Sigmoid colon (tissue), 7 donors: ENCODE measurements at regions of chr14 and their contacts with region 1.

Region 1: GRCh38 chr14:99192028-99192621 is 79.9 kb downstream of the BCL11B start:
- DNase-seq: peak; percentile 78
- H3K4me3 ChIP-seq: peak overlapping the region; percentile 24 to 50 (median 42)
- H3K27ac ChIP-seq: peak overlapping the region; percentile 22 to 60 (median 45)
- H3K4me1 ChIP-seq: peaks cover 0 to 18% (median 14%) of the 10 kb centered on the region in 4 donors
- H3K27me3 ChIP-seq: no peaks in the 10 kb centered on the region
- CTCF ChIP-seq: no peak
- EP300 ChIP-seq: no peak
- POLR2A ChIP-seq: no peak

Region 2: DNA sequence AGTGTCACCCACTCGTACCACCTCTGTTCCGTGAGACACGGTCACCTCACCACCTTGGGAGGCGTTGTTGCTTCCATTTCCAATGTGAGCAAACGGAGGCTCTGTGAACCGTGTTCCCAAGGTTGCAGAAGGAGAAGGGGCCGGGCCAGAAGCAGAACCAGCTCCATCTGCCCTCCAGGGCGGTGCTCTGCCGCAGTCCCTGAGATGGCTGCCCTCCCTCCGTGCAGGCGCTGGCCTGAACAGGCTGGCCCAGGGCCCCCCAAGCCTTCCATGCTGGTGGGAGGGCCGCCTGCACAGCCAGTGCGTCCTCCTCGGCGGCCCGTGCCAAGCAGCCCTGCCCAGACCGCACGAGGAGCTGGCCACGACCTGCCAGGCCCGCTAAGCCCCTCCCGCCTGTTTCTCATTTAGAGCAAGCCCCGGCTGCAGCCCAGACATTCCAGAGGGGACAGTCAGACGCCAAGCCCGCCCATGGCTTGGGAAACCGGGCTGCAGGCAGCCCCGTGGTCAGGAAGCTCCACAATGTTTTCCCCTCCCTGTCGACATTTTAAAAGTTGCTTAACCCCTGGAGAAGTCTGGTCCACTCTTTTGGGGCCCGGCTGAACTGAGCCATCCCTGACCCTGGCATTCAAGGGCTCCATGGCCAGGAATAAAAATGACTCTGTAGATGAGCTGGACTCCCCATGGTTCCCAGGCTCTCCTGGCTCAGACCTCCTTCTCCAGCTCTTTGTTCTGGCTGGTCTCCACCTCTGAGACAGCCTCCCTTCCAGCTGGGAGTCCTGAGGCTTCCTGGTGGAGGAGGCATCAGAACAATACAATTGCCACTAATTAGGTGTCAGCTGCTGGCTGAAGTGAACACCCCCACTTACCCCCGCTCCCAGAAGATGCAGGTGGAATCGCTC is 156.2 kb before region 1 on chr14:
- intact Hi-C with region 1: loop called (anchors 10 kb)
- DNase-seq: peak; percentile 94
- H3K4me3 ChIP-seq: peak overlapping the region in 3 of 4 donors; percentile 18 to 31 (median 28)
- H3K27ac ChIP-seq: peak overlapping the region; percentile 44 to 75 (median 57)
- H3K4me1 ChIP-seq: peaks cover 0 to 18% (median 14%) of the 10 kb centered on the region in 4 donors
- H3K27me3 ChIP-seq: no peaks in the 10 kb centered on the region
- CTCF ChIP-seq: no peak
- EP300 ChIP-seq: no peak
- POLR2A ChIP-seq: no peak